Caco-2 (cell line): ENCODE measurements at regions of chr11 and their contacts with region 1.

Region 1: DNA sequence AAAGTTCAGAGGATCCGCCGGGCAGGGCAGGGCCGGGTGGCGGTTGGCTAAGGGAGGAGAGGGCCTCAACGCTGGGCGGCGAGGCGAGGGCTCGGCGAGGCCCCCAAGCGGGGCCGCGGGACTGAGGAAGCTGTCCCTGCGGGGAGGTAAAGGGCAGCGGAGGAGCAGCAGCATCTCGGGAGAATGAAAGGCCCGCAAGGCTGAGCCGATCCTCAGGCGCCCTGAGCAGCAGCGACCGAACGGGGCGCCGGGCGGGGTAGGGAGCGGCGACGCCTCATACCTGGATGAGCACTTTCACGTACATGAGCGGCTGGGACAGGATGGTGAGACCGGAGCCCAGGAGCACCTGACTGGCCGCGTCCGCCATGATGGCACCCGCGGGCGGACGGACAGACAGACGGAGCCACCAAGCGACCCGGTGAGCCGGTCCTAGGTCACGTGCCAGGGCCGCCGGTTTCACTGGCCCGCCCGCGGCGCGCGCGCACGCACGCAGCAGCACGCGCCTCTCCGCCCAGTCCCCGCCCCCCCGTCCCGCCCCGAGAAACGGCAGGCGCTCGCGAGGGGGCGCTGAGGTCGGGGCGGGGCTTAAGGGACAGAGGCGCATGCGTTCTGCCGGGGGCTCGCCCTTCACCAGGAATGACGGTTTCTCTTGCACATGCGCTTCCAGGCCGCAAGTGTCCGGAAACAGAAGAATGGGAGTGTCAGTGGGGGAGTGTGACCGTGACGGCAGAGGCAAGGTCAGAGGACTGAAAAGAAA is at the start of gene MTCH2:
- DNase-seq: peak; percentile 97
- H3K4me3 ChIP-seq: peak within 1 kb of the TSS; percentile 87
- H3K4me3 Mint-ChIP-seq: peak within 1 kb of the TSS; percentile 99
- H3K27ac Mint-ChIP-seq: peak within 1 kb of the TSS; percentile 98
- H3K4me1 ChIP-seq: peaks cover 8% of the 10 kb centered on the region; the same call in 1 of the 2 replicates
- H3K4me1 Mint-ChIP-seq: no peaks in the 10 kb centered on the region
- H3K27me3 ChIP-seq: no peaks in the 10 kb centered on the region
- H3K27me3 Mint-ChIP-seq: no peaks in the 10 kb centered on the region
- CTCF ChIP-seq: peak in 1 of 2 experiments; percentile 53
- total RNA-seq, gene MTCH2: 165 and 167 TPM in 2 replicates

Region 2: DNA sequence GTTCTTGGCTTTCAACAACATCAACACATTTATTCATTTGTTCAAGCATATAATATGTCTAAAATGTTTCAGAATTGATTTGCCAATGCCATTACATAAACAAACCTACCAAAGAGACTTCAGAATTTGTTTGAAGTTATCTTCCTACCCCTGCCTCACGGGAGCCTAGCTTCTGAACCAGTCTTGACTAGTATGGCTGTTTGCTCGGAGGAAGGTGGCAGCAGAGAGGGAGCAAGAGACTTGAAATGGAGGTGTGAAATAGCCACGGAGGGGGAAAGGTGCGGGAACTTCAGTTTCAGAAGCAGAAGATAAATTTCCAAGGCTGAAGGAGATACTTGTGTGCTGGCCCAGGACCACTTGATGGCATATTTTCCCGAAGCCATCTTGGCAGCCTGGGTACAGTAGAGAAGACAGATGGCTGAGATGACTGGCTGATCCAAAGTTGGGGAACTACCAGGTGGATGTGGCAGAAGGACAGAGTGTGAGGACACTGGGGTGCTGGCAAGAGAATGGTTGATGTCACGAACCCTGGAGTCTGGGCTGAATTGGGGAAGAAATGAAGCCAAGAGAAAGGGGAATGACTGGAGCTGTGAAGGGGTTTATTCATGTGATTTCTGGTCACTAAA is 14.1 kb after region 1 on chr11:
- CTCF ChIA-PET with region 1: no interaction called
- POLR2A ChIA-PET with region 1: no interaction called
- intact Hi-C with region 1: no loop called
- DNase-seq: no peak
- H3K4me3 ChIP-seq: no peak overlapping the region
- H3K4me3 Mint-ChIP-seq: no peak overlapping the region
- H3K27ac Mint-ChIP-seq: no peak overlapping the region
- H3K4me1 ChIP-seq: no peaks in the 10 kb centered on the region
- H3K4me1 Mint-ChIP-seq: no peaks in the 10 kb centered on the region
- H3K27me3 ChIP-seq: no peaks in the 10 kb centered on the region
- H3K27me3 Mint-ChIP-seq: no peaks in the 10 kb centered on the region
- CTCF ChIP-seq: no peak

Region 3: DNA sequence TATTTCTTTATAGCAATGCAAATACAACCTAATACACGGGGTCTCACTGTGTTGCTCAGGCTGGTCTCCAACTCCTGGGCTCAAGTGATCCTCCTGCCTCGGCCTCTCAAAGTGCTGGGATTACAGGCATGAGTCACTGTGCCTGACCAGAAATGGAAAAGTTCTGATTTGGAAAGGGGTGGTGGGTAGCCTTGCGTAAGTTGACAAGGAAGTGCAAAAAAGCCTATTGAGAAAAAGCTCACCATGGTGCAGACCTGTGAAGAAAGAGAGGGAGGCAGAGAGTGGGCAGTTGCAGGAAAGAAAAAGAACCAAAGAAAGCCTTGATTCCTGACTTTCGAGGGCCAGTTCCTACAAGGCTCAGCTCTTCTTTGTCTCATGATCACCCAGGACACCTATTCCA is 45.8 kb after region 1 on chr11:
- CTCF ChIA-PET with region 1: no interaction called
- POLR2A ChIA-PET with region 1: no interaction called
- intact Hi-C with region 1: no loop called
- DNase-seq: no peak
- H3K4me3 ChIP-seq: no peak overlapping the region
- H3K4me3 Mint-ChIP-seq: no peak overlapping the region
- H3K27ac Mint-ChIP-seq: no peak overlapping the region
- H3K4me1 ChIP-seq: peaks cover 4% of the 10 kb centered on the region; the same call in 1 of the 2 replicates
- H3K4me1 Mint-ChIP-seq: no peaks in the 10 kb centered on the region
- H3K27me3 ChIP-seq: no peaks in the 10 kb centered on the region
- H3K27me3 Mint-ChIP-seq: no peaks in the 10 kb centered on the region
- CTCF ChIP-seq: no peak

Region 4: GRCh38 chr11:47715082-47715669 is 72.9 kb after region 1 on chr11 and contains the start of gene AGBL2:
- CTCF ChIA-PET with region 1: interaction called, 3 read pairs
- POLR2A ChIA-PET with region 1: no interaction called
- intact Hi-C with region 1: loop called (anchors 2 kb)
- DNase-seq: peak; percentile 79 to 82
- H3K4me3 ChIP-seq: peak within 1 kb of the TSS; percentile 49
- H3K4me3 Mint-ChIP-seq: peak within 1 kb of the TSS; percentile 88
- H3K27ac Mint-ChIP-seq: peak within 1 kb of the TSS; percentile 90
- H3K4me1 ChIP-seq: no peaks in the 10 kb centered on the region
- H3K4me1 Mint-ChIP-seq: no peaks in the 10 kb centered on the region
- H3K27me3 ChIP-seq: no peaks in the 10 kb centered on the region
- H3K27me3 Mint-ChIP-seq: no peaks in the 10 kb centered on the region
- CTCF ChIP-seq: no peak
- total RNA-seq, gene AGBL2: 2.9 and 3.4 TPM in 2 replicates

Region 5: DNA sequence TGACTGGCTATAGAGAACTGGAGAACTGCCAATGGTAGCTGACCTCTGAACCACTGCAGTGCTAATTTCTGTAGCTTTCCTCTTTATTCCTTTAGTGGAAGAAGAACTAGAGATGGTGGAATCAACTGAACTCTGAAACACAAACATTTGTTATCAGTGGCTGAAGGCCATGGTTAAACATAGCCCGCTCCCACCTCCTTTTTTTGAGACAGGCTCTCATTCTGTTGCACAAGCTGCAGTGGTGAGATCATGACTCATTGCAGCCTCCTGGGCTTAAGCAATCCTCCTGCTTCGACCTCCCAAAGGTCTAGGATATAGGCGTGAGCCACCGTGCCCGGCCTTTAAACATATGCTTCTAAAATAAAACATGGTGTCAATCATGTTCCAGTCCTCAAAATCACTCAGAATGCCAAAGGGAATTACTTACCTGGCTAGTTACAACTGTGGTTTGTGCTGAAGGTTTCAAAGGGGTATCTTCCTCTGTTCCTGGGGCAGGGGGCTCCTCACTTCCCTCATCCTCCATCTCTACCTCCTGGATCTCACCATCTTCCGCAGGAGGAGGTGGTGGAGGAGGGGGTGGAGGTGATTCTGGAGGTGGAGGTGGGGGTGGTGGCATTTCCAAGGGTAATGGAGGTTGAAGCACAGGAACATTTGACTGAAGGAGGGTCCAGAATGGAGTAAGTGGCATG is 81.9 kb after region 1 on chr11:
- CTCF ChIA-PET with region 1: interaction called, 6 read pairs
- POLR2A ChIA-PET with region 1: no interaction called
- intact Hi-C with region 1: loop called (anchors 2 kb)
- DNase-seq: peak; percentile 77 to 79
- H3K4me3 ChIP-seq: no peak overlapping the region
- H3K4me3 Mint-ChIP-seq: no peak overlapping the region
- H3K27ac Mint-ChIP-seq: peak overlapping the region; percentile 39
- H3K4me1 ChIP-seq: peaks cover 23% of the 10 kb centered on the region
- H3K4me1 Mint-ChIP-seq: peaks cover 9% of the 10 kb centered on the region
- H3K27me3 ChIP-seq: no peaks in the 10 kb centered on the region
- H3K27me3 Mint-ChIP-seq: no peaks in the 10 kb centered on the region
- CTCF ChIP-seq: no peak

Region 6: GRCh38 chr11:47766305-47767227 is 124.3 kb after region 1 on chr11:
- CTCF ChIA-PET with region 1: no interaction called
- POLR2A ChIA-PET with region 1: no interaction called
- intact Hi-C with region 1: loop called (anchors 1 kb)
- DNase-seq: peak; percentile 50 to 67
- H3K4me3 ChIP-seq: peak overlapping the region; percentile 63
- H3K4me3 Mint-ChIP-seq: peak overlapping the region; percentile 80
- H3K27ac Mint-ChIP-seq: peak overlapping the region; percentile 100
- H3K4me1 ChIP-seq: peaks cover 6% of the 10 kb centered on the region; the same call in 1 of the 2 replicates
- H3K4me1 Mint-ChIP-seq: peaks cover 15% of the 10 kb centered on the region
- H3K27me3 ChIP-seq: no peaks in the 10 kb centered on the region
- H3K27me3 Mint-ChIP-seq: no peaks in the 10 kb centered on the region
- CTCF ChIP-seq: no peak

Region 7: GRCh38 chr11:47858169-47858543 is 215.9 kb after region 1 on chr11:
- CTCF ChIA-PET with region 1: no interaction called
- POLR2A ChIA-PET with region 1: no interaction called
- intact Hi-C with region 1: loop called (anchors 10 kb)
- DNase-seq: no peak
- H3K4me3 ChIP-seq: no peak overlapping the region
- H3K4me3 Mint-ChIP-seq: no peak overlapping the region
- H3K27ac Mint-ChIP-seq: no peak overlapping the region
- H3K4me1 ChIP-seq: peaks cover 17% of the 10 kb centered on the region; the same call in 1 of the 2 replicates
- H3K4me1 Mint-ChIP-seq: no peaks in the 10 kb centered on the region
- H3K27me3 ChIP-seq: no peaks in the 10 kb centered on the region
- H3K27me3 Mint-ChIP-seq: no peaks in the 10 kb centered on the region
- CTCF ChIP-seq: no peak